ENCODE measurements at regions of chr1 and their contacts with region 1.

Region 1: GRCh38 chr1:9942939-9943788 is at the starts of genes LZIC and NMNAT1:
- DNase-seq: peak; percentile 98
- ATAC-seq: peak; percentile 99
- H3K4me3 ChIP-seq: peak within 1 kb of the TSS; percentile 80
- H3K27ac ChIP-seq: peak within 1 kb of the TSS; percentile 88
- H3K4me1 ChIP-seq: peaks cover 4 to 5% of the 10 kb centered on the region in 2 experiments; a peak in 3 of 5 replicates
- H3K27me3 ChIP-seq: no peaks in the 10 kb centered on the region
- CTCF ChIP-seq: no peak; a peak in 1 of 6 replicates
- EP300 ChIP-seq: peak; percentile 48
- POLR2A ChIP-seq: peak; percentile 98
- RAD21 ChIP-seq: no peak; a peak in 1 of 4 replicates
- polyA plus RNA-seq, gene LZIC: 101 to 109 TPM
- polyA plus RNA-seq, gene NMNAT1: 12.1 to 13.3 TPM

Region 2: DNA sequence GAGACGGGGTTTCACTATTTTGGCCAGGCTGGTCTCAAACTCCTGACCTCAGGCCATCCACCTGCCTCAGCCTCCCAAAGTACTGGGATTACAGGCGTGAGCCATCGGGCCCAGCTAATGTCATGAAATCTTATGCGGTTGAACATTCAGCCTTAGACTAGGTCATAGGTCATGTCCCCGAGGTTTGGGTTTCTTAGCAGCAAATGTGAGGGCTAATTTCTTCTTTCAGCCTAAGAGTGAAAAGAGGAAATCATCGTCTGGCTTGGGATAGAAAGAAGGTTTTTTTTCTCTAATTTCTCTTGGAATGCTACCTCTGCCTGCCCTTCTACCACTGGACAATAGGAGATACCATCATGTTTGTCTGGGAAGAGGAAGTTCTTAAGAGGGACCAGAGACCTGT is 309.7 kb before region 1 on chr1:
- CTCF ChIA-PET with region 1: no interaction called
- POLR2A ChIA-PET with region 1: no interaction called
- in situ Hi-C with region 1: no loop called
- intact Hi-C with region 1: no loop called
- DNase-seq: no peak
- ATAC-seq: no peak
- H3K4me3 ChIP-seq: no peak overlapping the region
- H3K27ac ChIP-seq: no peak overlapping the region
- H3K4me1 ChIP-seq: peaks cover 14 to 17% of the 10 kb centered on the region in 2 experiments; a peak in 4 of 5 replicates
- H3K27me3 ChIP-seq: no peaks in the 10 kb centered on the region; a peak in 3 of 5 replicates
- CTCF ChIP-seq: no peak
- EP300 ChIP-seq: no peak
- POLR2A ChIP-seq: no peak
- RAD21 ChIP-seq: no peak

Region 3: DNA sequence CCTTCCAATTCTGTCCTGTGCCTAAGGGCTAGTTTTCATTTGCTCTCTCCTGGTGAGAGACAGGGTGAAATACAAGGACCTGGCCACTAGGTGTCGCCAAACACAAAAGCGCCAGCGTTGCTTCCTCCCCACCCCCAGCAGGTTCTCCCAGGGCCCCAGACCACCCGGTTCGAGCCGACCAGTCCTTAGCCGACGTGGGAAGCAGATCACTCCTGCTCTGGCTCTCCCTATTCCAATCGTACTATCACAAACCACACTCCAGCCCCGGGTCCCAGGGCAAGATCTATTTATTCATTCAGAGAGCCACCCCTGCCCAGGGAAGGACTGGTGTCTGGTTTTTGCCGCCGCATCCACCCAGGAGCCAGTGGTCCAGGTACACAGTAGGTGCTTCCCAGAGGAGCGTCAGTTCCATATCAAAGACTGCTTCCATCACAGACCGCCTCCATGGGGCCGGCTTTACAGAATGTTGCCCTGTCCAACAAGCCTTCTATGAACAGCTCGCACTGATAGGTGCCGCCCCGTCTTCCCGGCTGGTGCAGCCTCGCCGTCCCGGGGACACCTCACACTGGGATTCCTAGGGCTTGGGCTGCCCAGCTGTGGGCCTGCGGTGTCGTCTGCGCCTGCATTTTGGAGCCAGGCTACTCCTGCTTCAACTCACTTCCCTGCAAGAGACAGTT is 68.1 kb before region 1 on chr1:
- CTCF ChIA-PET with region 1: interaction called, 9 read pairs
- POLR2A ChIA-PET with region 1: interaction called, 5 read pairs
- in situ Hi-C with region 1: loop called (anchors 10 kb)
- intact Hi-C with region 1: loop called (anchors 1 kb)
- DNase-seq: peak; percentile 88 to 98 (median 97)
- ATAC-seq: peak; percentile 96
- H3K4me3 ChIP-seq: no peak overlapping the region
- H3K27ac ChIP-seq: no peak overlapping the region
- H3K4me1 ChIP-seq: peaks cover 5 to 25% of the 10 kb centered on the region in 2 experiments; a peak in 4 of 5 replicates
- H3K27me3 ChIP-seq: no peaks in the 10 kb centered on the region
- CTCF ChIP-seq: peak; percentile 95 to 99 (median 98)
- EP300 ChIP-seq: no peak
- POLR2A ChIP-seq: no peak
- RAD21 ChIP-seq: peak; percentile 94 to 98

Region 4: DNA sequence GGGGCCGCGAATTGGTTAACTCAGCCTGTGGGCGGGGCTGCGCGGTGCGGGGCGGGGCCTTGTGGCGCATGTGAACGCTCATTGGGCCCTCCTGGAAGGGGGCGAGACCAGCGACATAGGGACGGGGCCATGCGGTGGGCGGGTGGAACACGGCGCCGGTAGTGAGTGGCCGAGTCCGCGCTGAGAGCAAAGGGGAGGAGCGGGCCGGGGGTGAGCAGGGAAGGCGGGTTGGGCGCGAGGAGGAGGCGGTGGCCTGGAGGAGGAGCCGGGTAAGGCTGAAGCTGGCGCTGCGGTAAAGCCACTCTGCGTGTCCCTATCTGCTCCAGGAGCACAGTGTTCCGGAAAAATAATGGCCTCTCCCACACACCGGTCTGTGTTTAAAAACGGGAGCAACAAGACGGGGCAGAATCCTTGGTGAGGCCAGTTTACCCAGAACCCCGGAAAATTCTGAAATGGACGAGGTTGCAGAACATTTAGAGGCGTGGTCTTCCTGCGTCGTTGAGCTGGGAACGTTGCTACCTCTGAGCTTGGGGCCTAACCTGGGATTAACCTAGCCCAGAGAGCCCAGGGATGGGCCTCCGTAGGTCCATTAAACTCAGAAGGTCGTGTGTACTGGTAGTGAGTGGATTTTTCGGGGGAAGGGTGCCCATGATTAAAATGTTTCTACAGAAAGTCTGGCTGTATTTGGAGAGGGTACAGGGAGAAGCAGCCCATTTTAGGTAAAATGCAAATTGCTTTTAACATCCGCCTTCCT is 32.6 kb before region 1 on chr1:
- CTCF ChIA-PET with region 1: interaction called, 4 read pairs
- POLR2A ChIA-PET with region 1: interaction called, 18 read pairs
- in situ Hi-C with region 1: no loop called
- intact Hi-C with region 1: loop called (anchors 2 kb)
- DNase-seq: peak; percentile 98 to 100 (median 99)
- ATAC-seq: peak; percentile 97
- H3K4me3 ChIP-seq: peak overlapping the region; percentile 48
- H3K27ac ChIP-seq: peak overlapping the region; percentile 93
- H3K4me1 ChIP-seq: peaks cover 25 to 33% of the 10 kb centered on the region in 2 experiments
- H3K27me3 ChIP-seq: no peaks in the 10 kb centered on the region
- CTCF ChIP-seq: no peak
- EP300 ChIP-seq: no peak; the same call in 1 of the 2 replicates
- POLR2A ChIP-seq: peak; percentile 94
- RAD21 ChIP-seq: no peak

Region 5: GRCh38 chr1:9960706-9961562 is 17.8 kb after region 1 on chr1:
- CTCF ChIA-PET with region 1: no interaction called
- POLR2A ChIA-PET with region 1: interaction called, 16 read pairs
- in situ Hi-C with region 1: no loop called
- intact Hi-C with region 1: no loop called
- DNase-seq: no peak
- ATAC-seq: no peak
- H3K4me3 ChIP-seq: no peak overlapping the region
- H3K27ac ChIP-seq: no peak overlapping the region
- H3K4me1 ChIP-seq: no peaks in the 10 kb centered on the region
- H3K27me3 ChIP-seq: no peaks in the 10 kb centered on the region
- CTCF ChIP-seq: no peak
- EP300 ChIP-seq: no peak
- POLR2A ChIP-seq: no peak
- RAD21 ChIP-seq: no peak

Region 6: DNA sequence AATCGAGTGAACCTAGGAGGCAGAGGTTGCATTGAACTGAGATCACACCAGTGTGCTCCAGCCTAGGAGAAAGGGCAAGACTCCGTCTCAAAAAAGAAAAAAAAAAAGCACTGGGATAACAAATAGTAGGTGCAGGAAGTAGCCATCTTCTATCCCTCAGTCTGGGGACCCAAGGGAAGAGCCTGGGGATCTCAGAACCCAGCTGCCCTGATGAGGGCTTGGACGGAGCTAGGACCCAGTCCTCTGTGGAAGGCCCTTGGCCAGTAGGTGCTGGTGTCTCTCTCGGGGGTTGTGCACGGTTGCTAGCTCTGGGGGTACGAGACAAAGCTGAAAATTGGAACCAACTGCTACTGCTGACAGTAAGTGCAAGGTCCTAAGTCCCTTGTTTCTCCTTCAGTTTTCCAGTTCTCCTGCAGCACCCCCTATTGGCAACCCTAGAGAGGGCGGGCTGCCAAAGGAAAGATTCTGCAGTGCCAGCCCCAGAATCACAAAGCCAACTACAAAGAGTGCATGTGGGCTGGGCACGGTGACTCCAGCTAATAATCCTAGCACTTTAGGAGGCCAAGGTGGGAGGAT is 209.6 kb after region 1 on chr1:
- CTCF ChIA-PET with region 1: no interaction called
- POLR2A ChIA-PET with region 1: interaction called, 7 read pairs
- in situ Hi-C with region 1: no loop called
- intact Hi-C with region 1: loop called (anchors 1 kb)
- DNase-seq: peak; percentile 37 to 66 (median 54)
- ATAC-seq: peak; percentile 90
- H3K4me3 ChIP-seq: no peak overlapping the region
- H3K27ac ChIP-seq: no peak overlapping the region
- H3K4me1 ChIP-seq: no peaks in the 10 kb centered on the region
- H3K27me3 ChIP-seq: no peaks in the 10 kb centered on the region
- CTCF ChIP-seq: peak; percentile 72 to 86 (median 81)
- EP300 ChIP-seq: no peak
- POLR2A ChIP-seq: no peak
- RAD21 ChIP-seq: peak; percentile 54 to 74